ENCODE measurements at regions of chr9 and their contacts with region 1.

Region 1: DNA sequence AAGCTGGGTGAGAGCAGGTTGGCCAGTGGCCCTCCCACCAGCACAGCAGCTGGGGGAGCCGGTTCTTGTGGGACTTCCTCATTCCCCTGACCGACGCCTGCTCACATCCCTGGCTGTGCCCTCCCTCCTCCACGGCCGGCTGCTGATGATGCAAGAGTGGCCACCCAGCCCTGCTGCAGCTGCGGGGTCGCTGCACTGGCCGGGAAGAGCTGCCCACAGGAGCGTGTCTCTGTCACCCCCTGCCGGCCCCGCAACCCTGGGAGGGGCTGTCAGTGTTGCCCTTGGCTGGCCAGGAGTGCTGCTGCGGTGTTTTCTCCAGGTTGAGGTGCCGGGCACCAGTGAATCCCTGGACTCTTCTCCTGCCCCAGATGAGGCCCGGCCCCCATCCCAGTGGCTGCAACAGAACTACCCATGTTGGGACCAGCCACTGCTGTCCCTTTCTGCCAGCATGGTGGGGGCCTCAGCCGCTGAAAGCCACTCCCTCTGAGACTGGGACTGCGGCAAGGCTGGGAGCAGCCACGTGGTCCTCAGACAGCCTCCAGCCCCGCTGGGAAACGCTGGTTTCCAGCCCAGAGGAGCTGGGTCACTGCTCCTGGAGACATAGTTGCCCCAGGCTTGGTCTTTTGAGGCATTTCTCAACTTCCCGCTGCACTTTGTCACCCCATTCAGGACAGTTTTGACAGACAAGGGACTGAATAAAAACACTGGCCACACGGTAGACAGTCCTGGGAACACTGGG is 739 bp downstream of the CARD9 start:
- DNase-seq: no peak
- H3K4me3 ChIP-seq: no peak overlapping the region
- H3K27ac ChIP-seq: no peak overlapping the region; the same call in 1 of the 2 replicates
- H3K4me1 ChIP-seq: no peaks in the 10 kb centered on the region
- H3K27me3 ChIP-seq: no peaks in the 10 kb centered on the region
- CTCF ChIP-seq: no peak
- EP300 ChIP-seq: no peak
- POLR2A ChIP-seq: no peak
- RAD21 ChIP-seq: 0 out of 4 replicates have a peak, but pooled peaks of 1 of the 2 experiments have one; percentile 1

Region 2: GRCh38 chr9:136345281-136346156 is 27.2 kb before region 1 on chr9:
- CTCF ChIA-PET with region 1: interaction called, 19 read pairs
- POLR2A ChIA-PET with region 1: interaction called, 137 read pairs
- DNase-seq: peak in 1 of 2 experiments; percentile 82
- H3K4me3 ChIP-seq: no peak overlapping the region
- H3K27ac ChIP-seq: peak overlapping the region; percentile 7; the same call in 1 of the 2 replicates
- H3K4me1 ChIP-seq: peaks cover 0 to 19% (median 10%) of the 10 kb centered on the region in 4 experiments; a peak in 6 of 7 replicates
- H3K27me3 ChIP-seq: no peaks in the 10 kb centered on the region
- CTCF ChIP-seq: peak in 2 of 3 experiments; percentile 58; a peak in 3 of 4 replicates
- EP300 ChIP-seq: no peak
- POLR2A ChIP-seq: no peak
- RAD21 ChIP-seq: peak; percentile 42 to 58

Region 3: DNA sequence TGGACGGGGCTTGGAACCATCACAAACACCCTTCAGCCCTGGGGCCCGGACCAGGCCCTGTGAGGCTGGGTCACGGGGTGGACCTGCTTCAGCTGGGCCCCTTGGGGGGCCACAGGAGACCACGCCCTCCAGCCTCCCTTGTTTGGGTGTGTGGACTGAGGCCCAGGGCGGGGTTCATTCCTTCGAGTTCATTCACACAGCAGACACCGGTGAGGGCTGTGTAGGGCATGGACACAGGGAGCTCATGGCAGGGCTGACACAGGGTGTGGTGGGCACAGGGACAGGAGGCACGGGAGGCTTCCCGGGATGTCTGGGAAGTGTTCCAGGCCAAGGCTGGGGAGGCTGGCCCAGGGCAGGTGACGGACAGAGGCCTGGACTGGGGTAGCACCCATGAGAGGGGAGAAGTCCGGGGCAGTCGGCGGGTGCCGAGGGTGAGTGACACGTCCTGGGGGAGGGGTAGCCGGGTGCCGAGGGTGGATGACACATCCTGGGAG is 18.1 kb before region 1 on chr9:
- CTCF ChIA-PET with region 1: interaction called, 4 read pairs
- POLR2A ChIA-PET with region 1: interaction called, 43 read pairs
- DNase-seq: no peak
- H3K4me3 ChIP-seq: no peak overlapping the region
- H3K27ac ChIP-seq: no peak overlapping the region
- H3K4me1 ChIP-seq: no peaks in the 10 kb centered on the region
- H3K27me3 ChIP-seq: no peaks in the 10 kb centered on the region; a peak in 2 of 7 replicates
- CTCF ChIP-seq: no peak
- EP300 ChIP-seq: no peak
- POLR2A ChIP-seq: no peak
- RAD21 ChIP-seq: no peak

Region 4: DNA sequence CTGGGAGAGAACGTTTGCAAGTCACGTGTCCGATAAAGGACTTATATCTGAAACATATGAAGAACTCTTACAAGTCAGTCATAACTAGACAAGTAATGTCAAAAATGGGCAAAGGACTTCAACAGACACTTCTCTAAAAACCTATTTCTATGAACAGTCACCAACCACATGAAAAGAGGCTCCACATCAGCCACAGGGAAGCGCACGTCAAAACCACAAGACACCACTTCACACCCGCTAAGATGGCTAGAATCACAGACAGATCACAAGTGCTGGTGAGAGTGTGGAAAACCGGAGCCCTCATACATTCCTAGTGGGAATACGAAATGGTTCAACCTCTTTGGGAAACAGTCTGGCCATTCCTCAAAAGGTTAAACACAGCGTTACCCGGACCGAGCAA is 12.3 kb after region 1 on chr9:
- CTCF ChIA-PET with region 1: interaction called, 4 read pairs
- POLR2A ChIA-PET with region 1: interaction called, 30 read pairs
- DNase-seq: no peak
- H3K4me3 ChIP-seq: no peak overlapping the region
- H3K27ac ChIP-seq: no peak overlapping the region
- H3K4me1 ChIP-seq: no peaks in the 10 kb centered on the region
- H3K27me3 ChIP-seq: no peaks in the 10 kb centered on the region
- CTCF ChIP-seq: no peak
- EP300 ChIP-seq: no peak
- POLR2A ChIP-seq: no peak
- RAD21 ChIP-seq: no peak

Region 5: GRCh38 chr9:136392538-136393449 is 20.1 kb after region 1 on chr9:
- CTCF ChIA-PET with region 1: interaction called, 3 read pairs
- POLR2A ChIA-PET with region 1: interaction called, 72 read pairs
- DNase-seq: no peak
- H3K4me3 ChIP-seq: no peak overlapping the region
- H3K27ac ChIP-seq: no peak overlapping the region
- H3K4me1 ChIP-seq: no peaks in the 10 kb centered on the region
- H3K27me3 ChIP-seq: no peaks in the 10 kb centered on the region
- CTCF ChIP-seq: no peak
- EP300 ChIP-seq: no peak
- POLR2A ChIP-seq: no peak
- RAD21 ChIP-seq: no peak